Gastrocnemius medialis (tissue), 4 donors: ENCODE measurements at regions of chr16 and their contacts with region 1.

Region 1: DNA sequence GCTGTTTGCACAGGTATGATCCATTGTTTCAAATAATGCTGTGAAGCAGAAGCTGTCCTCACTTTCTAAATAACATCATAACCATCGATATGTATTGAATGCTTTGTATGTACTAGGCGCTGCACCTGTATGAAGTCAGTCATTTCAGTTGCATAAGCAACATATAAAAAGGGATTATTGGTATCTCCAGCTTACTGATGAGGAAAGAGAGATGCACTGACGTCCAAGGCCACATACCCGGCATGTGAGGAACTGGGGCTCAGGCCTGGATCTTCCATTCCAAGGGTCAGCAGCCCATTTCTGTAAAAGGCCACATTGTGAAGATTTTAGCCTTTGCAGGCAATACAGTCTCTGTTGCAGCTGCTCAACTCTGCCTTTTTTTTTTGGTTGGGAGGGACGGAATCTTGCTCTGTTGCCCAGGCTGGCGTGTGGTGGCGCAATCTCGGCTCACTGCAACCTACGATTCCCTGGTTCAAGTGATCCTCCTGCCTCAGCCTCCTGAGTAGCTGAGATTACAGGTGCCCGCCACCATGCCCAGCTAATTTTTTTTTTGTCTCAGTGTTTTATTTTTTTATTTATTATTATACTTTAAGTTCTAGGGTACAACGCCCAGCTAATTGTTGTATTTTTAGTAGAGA is 244.7 kb downstream of the MRTFB start:
- DNase-seq: no peak
- ATAC-seq: no peak
- H3K4me3 ChIP-seq: no peak overlapping the region
- H3K27ac ChIP-seq: peak overlapping the region; percentile 95 to 99 (median 98)
- H3K4me1 ChIP-seq: peaks cover 54 to 68% of the 10 kb centered on the region in 2 donors
- H3K27me3 ChIP-seq: no peaks in the 10 kb centered on the region
- CTCF ChIP-seq: no peak
- POLR2A ChIP-seq: no peak

Region 2: GRCh38 chr16:14347706-14348105 is 31.9 kb after region 1 on chr16:
- in situ Hi-C with region 1: no loop called
- intact Hi-C with region 1: loop called (anchors 2 kb)
- DNase-seq: peak; percentile 54 to 62
- ATAC-seq: peak; percentile 63 to 82
- H3K4me3 ChIP-seq: no peak overlapping the region
- H3K27ac ChIP-seq: peak overlapping the region; percentile 75 to 84 (median 80)
- H3K4me1 ChIP-seq: peaks cover 18 to 29% of the 10 kb centered on the region in 2 donors
- H3K27me3 ChIP-seq: no peaks in the 10 kb centered on the region
- CTCF ChIP-seq: no peak
- POLR2A ChIP-seq: peak in 1 of 2 donors; percentile 23

Region 3: DNA sequence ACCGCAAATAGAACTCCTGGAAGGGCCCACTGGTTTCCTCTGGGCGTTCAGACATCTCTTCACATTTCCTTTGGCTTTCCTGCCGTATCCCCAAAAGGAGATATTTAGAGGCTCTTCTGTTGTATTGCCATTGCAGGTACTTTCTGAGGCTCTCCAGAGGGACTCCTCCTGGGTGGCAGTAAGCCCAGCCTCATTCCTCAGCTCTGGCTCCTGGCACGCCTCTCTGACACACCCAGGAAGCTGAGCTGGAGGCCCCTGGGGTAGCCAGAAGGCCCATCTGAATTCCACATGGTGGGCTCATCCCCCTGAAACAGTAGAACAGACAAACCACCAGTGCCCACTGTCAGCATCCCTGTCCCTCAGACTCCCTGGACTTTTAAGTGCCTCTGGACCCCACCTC is 107.5 kb after region 1 on chr16:
- in situ Hi-C with region 1: loop called in 1 of 4 experiments (anchors 25 kb)
- intact Hi-C with region 1: loop called (anchors 5 kb)
- DNase-seq: peak in 1 of 2 donors; percentile 23
- ATAC-seq: no peak
- H3K4me3 ChIP-seq: no peak overlapping the region
- H3K27ac ChIP-seq: peak overlapping the region; percentile 40 to 76 (median 62)
- H3K4me1 ChIP-seq: peaks cover 42 to 49% of the 10 kb centered on the region in 2 donors
- H3K27me3 ChIP-seq: no peaks in the 10 kb centered on the region
- CTCF ChIP-seq: no peak
- POLR2A ChIP-seq: no peak